HepG2 (cell line): ENCODE measurements at regions of chr3 and their contacts with region 1.

Region 1: GRCh38 chr3:156674046-156674910 is at the start of gene TIPARP:
- DNase-seq: peak; percentile 92
- ATAC-seq: peak; percentile 92
- H3K4me3 ChIP-seq: peak within 1 kb of the TSS; percentile 76 to 96 (median 82)
- H3K27ac ChIP-seq: peak within 1 kb of the TSS; percentile 89
- H3K4me1 ChIP-seq: peaks cover 44% of the 10 kb centered on the region
- H3K27me3 ChIP-seq: no peaks in the 10 kb centered on the region
- CTCF ChIP-seq: peak; percentile 90
- EP300 ChIP-seq: peak in 1 of 2 experiments; percentile 14; a peak in 1 of 4 replicates
- POLR2A ChIP-seq: peak; percentile 98 to 99
- RAD21 ChIP-seq: peak; percentile 92
- total RNA-seq, gene TIPARP: 19.7 and 25.4 TPM in 2 replicates

Region 2: GRCh38 chr3:156554842-156555687 is 119.2 kb before region 1 on chr3 and contains the start of gene SSR3:
- CTCF ChIA-PET with region 1: no interaction called
- POLR2A ChIA-PET with region 1: interaction called, 16 read pairs
- in situ Hi-C with region 1: loop called (anchors 10 kb)
- intact Hi-C with region 1: loop called (anchors 1 kb)
- DNase-seq: peak; percentile 96
- ATAC-seq: peak; percentile 99
- H3K4me3 ChIP-seq: peak within 1 kb of the TSS; percentile 85 to 100 (median 91)
- H3K27ac ChIP-seq: peak within 1 kb of the TSS; percentile 94
- H3K4me1 ChIP-seq: peaks cover 38% of the 10 kb centered on the region
- H3K27me3 ChIP-seq: no peaks in the 10 kb centered on the region; a peak in 2 of 5 replicates
- CTCF ChIP-seq: no peak
- EP300 ChIP-seq: peak in 1 of 2 experiments; percentile 35; a peak in 2 of 4 replicates
- POLR2A ChIP-seq: peak; percentile 88 to 98
- RAD21 ChIP-seq: no peak; the same call in 1 of the 2 replicates
- total RNA-seq, gene SSR3: 268 and 325 TPM in 2 replicates

Region 3: DNA sequence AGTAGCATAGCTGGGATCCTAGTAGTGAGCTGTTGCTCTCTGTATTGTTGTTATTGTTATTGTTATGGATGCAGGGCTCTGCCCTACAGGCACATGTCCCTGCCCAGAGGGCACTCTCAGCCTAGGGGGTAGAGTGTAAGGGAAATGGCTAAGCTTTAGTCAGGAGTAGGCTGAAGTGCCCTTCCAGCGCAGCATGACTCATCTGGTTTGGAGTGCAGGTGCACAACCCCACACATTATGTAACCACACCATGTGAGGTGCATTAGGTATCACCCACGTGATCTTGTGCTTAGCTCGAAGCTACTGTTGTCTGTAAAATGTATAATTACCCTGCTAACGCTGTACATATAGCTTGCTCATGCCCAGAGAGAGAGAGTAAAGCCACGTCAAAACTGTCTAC is 48.2 kb before region 1 on chr3:
- CTCF ChIA-PET with region 1: no interaction called
- POLR2A ChIA-PET with region 1: no interaction called
- in situ Hi-C with region 1: no loop called
- intact Hi-C with region 1: no loop called
- DNase-seq: no peak
- ATAC-seq: no peak
- H3K4me3 ChIP-seq: no peak overlapping the region
- H3K27ac ChIP-seq: no peak overlapping the region
- H3K4me1 ChIP-seq: peaks cover 23% of the 10 kb centered on the region
- H3K27me3 ChIP-seq: no peaks in the 10 kb centered on the region
- CTCF ChIP-seq: no peak
- EP300 ChIP-seq: no peak
- POLR2A ChIP-seq: no peak
- RAD21 ChIP-seq: no peak

Region 4: GRCh38 chr3:156826144-156826895 is 152.0 kb after region 1 on chr3 and contains the start of gene LEKR1:
- CTCF ChIA-PET with region 1: no interaction called
- POLR2A ChIA-PET with region 1: no interaction called
- in situ Hi-C with region 1: no loop called
- intact Hi-C with region 1: loop called (anchors 10 kb)
- DNase-seq: peak; percentile 40
- ATAC-seq: peak; percentile 88
- H3K4me3 ChIP-seq: peak within 1 kb of the TSS; percentile 46 to 71 (median 53); a peak in 5 of 6 replicates
- H3K27ac ChIP-seq: peak within 1 kb of the TSS; percentile 73
- H3K4me1 ChIP-seq: peaks cover 9% of the 10 kb centered on the region; the same call in 1 of the 2 replicates
- H3K27me3 ChIP-seq: no peaks in the 10 kb centered on the region; a peak in 1 of 5 replicates
- CTCF ChIP-seq: peak; percentile 2; the same call in 1 of the 2 replicates
- EP300 ChIP-seq: no peak
- POLR2A ChIP-seq: peak; percentile 7 to 53; a peak in 2 of 4 replicates
- RAD21 ChIP-seq: no peak
- total RNA-seq, gene LEKR1: 0.91 and 1.5 TPM in 2 replicates

Region 5: GRCh38 chr3:157088601-157089454 is 414.6 kb after region 1 on chr3:
- CTCF ChIA-PET with region 1: no interaction called
- POLR2A ChIA-PET with region 1: interaction called, 36 read pairs
- in situ Hi-C with region 1: loop called (anchors 10 kb)
- intact Hi-C with region 1: loop called (anchors 2 kb)
- DNase-seq: peak; percentile 91
- ATAC-seq: peak; percentile 93
- H3K4me3 ChIP-seq: peak overlapping the region; percentile 56 to 67 (median 58)
- H3K27ac ChIP-seq: peak overlapping the region; percentile 96
- H3K4me1 ChIP-seq: peaks cover 43% of the 10 kb centered on the region
- H3K27me3 ChIP-seq: no peaks in the 10 kb centered on the region
- CTCF ChIP-seq: peak; percentile 54
- EP300 ChIP-seq: peak in 1 of 2 experiments; percentile 72; a peak in 1 of 4 replicates
- POLR2A ChIP-seq: peak; percentile 49 to 83
- RAD21 ChIP-seq: 0 out of 2 replicates have a peak, but pooled peaks have one; percentile 35